Endothelial cell of umbilical vein (primary cell): ENCODE measurements at regions of chr7 and their contacts with region 1.

Region 1: DNA sequence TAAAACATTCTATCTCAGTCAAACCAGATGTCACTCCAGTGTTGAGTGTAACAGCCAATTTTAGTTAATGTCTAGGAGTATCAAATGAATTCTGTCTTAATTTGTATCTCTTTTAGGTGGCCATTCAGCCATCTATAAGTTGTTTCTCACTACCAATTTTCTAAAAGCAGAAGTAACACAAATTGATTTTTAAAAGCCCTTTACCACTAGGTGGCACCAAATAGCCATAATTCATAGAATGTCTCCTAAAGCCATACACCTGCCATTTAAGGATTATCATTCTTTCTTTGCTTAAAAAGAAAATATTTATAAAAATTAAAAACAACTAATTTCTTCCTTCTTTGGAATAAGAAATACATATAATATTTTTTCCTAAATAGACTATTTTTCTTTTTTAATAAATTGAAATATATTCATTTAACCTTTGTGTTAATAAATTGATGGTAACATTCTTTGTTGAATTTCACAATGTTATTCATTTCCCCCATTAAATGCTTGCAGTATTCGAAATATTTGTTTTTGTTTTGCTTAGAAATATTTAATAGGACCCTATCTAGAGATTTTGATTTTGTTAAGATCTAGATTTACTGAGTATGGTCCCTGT is 107.8 kb upstream of the PPP1R3A start:
- DNase-seq: peak; percentile 64
- H3K4me3 ChIP-seq: no peak overlapping the region
- H3K27ac ChIP-seq: no peak overlapping the region
- H3K4me1 ChIP-seq: no peaks in the 10 kb centered on the region
- H3K27me3 ChIP-seq: no peaks in the 10 kb centered on the region
- CTCF ChIP-seq: peak; percentile 24 to 36
- POLR2A ChIP-seq: no peak

Region 2: GRCh38 chr7:113998934-113999333 is 27.7 kb before region 1 on chr7:
- CTCF ChIA-PET with region 1: no interaction called
- POLR2A ChIA-PET with region 1: no interaction called
- dilution Hi-C with region 1: no loop called
- intact Hi-C with region 1: no loop called
- DNase-seq: no peak
- H3K4me3 ChIP-seq: no peak overlapping the region
- H3K27ac ChIP-seq: no peak overlapping the region
- H3K4me1 ChIP-seq: no peaks in the 10 kb centered on the region
- H3K27me3 ChIP-seq: no peaks in the 10 kb centered on the region
- CTCF ChIP-seq: no peak
- POLR2A ChIP-seq: no peak

Region 3: DNA sequence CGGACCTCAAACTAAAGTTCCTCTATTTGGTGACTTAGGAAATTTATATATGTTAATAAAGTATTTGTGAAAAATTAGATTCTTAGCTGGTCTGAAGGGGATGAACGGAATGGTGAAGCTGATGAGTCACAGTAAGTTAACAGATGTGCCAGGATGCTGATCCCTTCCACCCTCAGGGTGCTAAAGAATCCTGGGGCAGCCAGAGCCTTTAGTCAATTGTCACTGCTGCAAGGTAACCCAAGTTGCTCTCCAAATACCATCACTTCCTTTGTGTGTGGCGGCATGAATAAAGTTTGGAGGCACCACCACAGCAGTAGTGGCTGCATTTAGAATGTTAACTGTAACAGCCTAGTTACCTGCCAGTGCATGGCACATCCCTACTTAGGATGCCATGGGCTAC is 114.8 kb after region 1 on chr7:
- CTCF ChIA-PET with region 1: no interaction called
- POLR2A ChIA-PET with region 1: no interaction called
- dilution Hi-C with region 1: no loop called
- intact Hi-C with region 1: no loop called
- DNase-seq: no peak
- H3K4me3 ChIP-seq: no peak overlapping the region
- H3K27ac ChIP-seq: no peak overlapping the region
- H3K4me1 ChIP-seq: no peaks in the 10 kb centered on the region
- H3K27me3 ChIP-seq: no peaks in the 10 kb centered on the region
- CTCF ChIP-seq: no peak
- POLR2A ChIP-seq: no peak

Region 4: DNA sequence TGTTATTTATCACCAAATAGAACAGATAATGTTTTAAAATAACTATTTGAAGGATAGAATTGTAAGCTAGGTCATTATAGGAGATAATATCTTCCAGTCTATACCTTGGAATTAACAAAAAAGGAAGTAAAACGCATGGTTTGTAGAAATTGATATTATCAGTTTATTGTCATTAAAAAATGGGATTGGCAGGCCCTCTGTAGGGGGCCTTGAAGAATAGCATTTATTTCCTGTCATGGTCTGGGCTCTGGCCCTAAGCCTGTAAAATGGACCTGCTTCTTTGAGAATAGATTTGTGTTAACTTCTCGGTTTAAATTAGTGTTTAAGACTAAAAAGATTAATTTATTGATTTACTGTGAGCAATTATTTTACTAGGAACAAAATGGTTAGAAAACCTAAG is 190.4 kb after region 1 on chr7:
- CTCF ChIA-PET with region 1: no interaction called
- POLR2A ChIA-PET with region 1: no interaction called
- dilution Hi-C with region 1: no loop called
- intact Hi-C with region 1: loop called (anchors 5 kb)
- DNase-seq: no peak
- H3K4me3 ChIP-seq: no peak overlapping the region
- H3K27ac ChIP-seq: no peak overlapping the region
- H3K4me1 ChIP-seq: no peaks in the 10 kb centered on the region
- H3K27me3 ChIP-seq: no peaks in the 10 kb centered on the region
- CTCF ChIP-seq: no peak
- POLR2A ChIP-seq: no peak

Region 5: GRCh38 chr7:114405427-114405826 is 378.8 kb after region 1 on chr7:
- CTCF ChIA-PET with region 1: interaction called, 3 read pairs
- POLR2A ChIA-PET with region 1: no interaction called
- dilution Hi-C with region 1: no loop called
- intact Hi-C with region 1: loop called (anchors 5 kb)
- DNase-seq: no peak
- H3K4me3 ChIP-seq: no peak overlapping the region
- H3K27ac ChIP-seq: no peak overlapping the region
- H3K4me1 ChIP-seq: no peaks in the 10 kb centered on the region
- H3K27me3 ChIP-seq: no peaks in the 10 kb centered on the region
- CTCF ChIP-seq: peak in 1 of 2 donors; percentile 3
- POLR2A ChIP-seq: no peak